Naive thymus-derived CD4-positive, alpha-beta T cell (primary cell): ENCODE measurements at regions of chr22 and their contacts with region 1.

Region 1: GRCh38 chr22:19629720-19630419 is 84.4 kb upstream of the SEPTIN5 start:
- DNase-seq: peak; percentile 65 to 91 (median 86)
- ATAC-seq: peak; percentile 97
- H3K4me3 ChIP-seq: no peak overlapping the region
- H3K4me3 Mint-ChIP-seq: peak overlapping the region in 1 of 10 donors; percentile 26
- H3K27ac ChIP-seq: no peak overlapping the region
- H3K27ac Mint-ChIP-seq: peak overlapping the region in 3 of 9 donors; percentile 6 to 56 (median 43)
- H3K4me1 ChIP-seq: peaks cover 0 to 7% of the 10 kb centered on the region in 2 donors
- H3K4me1 Mint-ChIP-seq: peaks cover 3 to 22% (median 10%) of the 10 kb centered on the region in 7 donors
- H3K27me3 ChIP-seq: no peaks in the 10 kb centered on the region
- H3K27me3 Mint-ChIP-seq: peaks cover 0 to 3% (median 0%) of the 10 kb centered on the region in 5 donors

Region 2: GRCh38 chr22:19178656-19179496 is 451.0 kb before region 1 on chr22 and contains the start of gene SLC25A1:
- CTCF ChIA-PET with region 1: no interaction called
- POLR2A ChIA-PET with region 1: no interaction called
- intact Hi-C with region 1: loop called in 1 of 2 experiments (anchors 1 kb)
- DNase-seq: peak in 8 of 9 donors; percentile 42 to 96 (median 49)
- ATAC-seq: peak; percentile 82
- H3K4me3 ChIP-seq: peak within 1 kb of the TSS; percentile 58
- H3K4me3 Mint-ChIP-seq: peak within 1 kb of the TSS; percentile 83 to 92 (median 86)
- H3K27ac ChIP-seq: peak within 1 kb of the TSS; percentile 63
- H3K27ac Mint-ChIP-seq: peak within 1 kb of the TSS; percentile 31 to 92 (median 85)
- H3K4me1 ChIP-seq: peaks cover 7 to 9% of the 10 kb centered on the region in 2 donors
- H3K4me1 Mint-ChIP-seq: peaks cover 13 to 28% (median 23%) of the 10 kb centered on the region in 7 donors
- H3K27me3 ChIP-seq: no peaks in the 10 kb centered on the region
- H3K27me3 Mint-ChIP-seq: no peaks in the 10 kb centered on the region
- total RNA-seq, gene SLC25A1: 19.3 to 34.0 (median 30.7) TPM

Region 3: GRCh38 chr22:19394274-19395050 is 235.4 kb before region 1 on chr22:
- CTCF ChIA-PET with region 1: interaction called, 3 read pairs
- POLR2A ChIA-PET with region 1: no interaction called
- intact Hi-C with region 1: loop called in 1 of 2 experiments (anchors 5 kb)
- DNase-seq: no peak
- ATAC-seq: no peak
- H3K4me3 ChIP-seq: no peak overlapping the region
- H3K4me3 Mint-ChIP-seq: no peak overlapping the region
- H3K27ac ChIP-seq: no peak overlapping the region
- H3K27ac Mint-ChIP-seq: no peak overlapping the region
- H3K4me1 ChIP-seq: no peaks in the 10 kb centered on the region
- H3K4me1 Mint-ChIP-seq: peaks cover 0 to 5% (median 0%) of the 10 kb centered on the region in 7 donors
- H3K27me3 ChIP-seq: no peaks in the 10 kb centered on the region
- H3K27me3 Mint-ChIP-seq: no peaks in the 10 kb centered on the region

Region 4: GRCh38 chr22:19495562-19496323 is 134.1 kb before region 1 on chr22:
- CTCF ChIA-PET with region 1: interaction called, 26 read pairs
- POLR2A ChIA-PET with region 1: interaction called, 8 read pairs
- intact Hi-C with region 1: loop called (anchors 1 kb)
- DNase-seq: peak in 7 of 9 donors; percentile 35 to 67 (median 57)
- ATAC-seq: peak; percentile 63
- H3K4me3 ChIP-seq: no peak overlapping the region
- H3K4me3 Mint-ChIP-seq: no peak overlapping the region
- H3K27ac ChIP-seq: no peak overlapping the region
- H3K27ac Mint-ChIP-seq: peak overlapping the region; percentile 49 to 88 (median 73)
- H3K4me1 ChIP-seq: peaks cover 0 to 9% of the 10 kb centered on the region in 2 donors
- H3K4me1 Mint-ChIP-seq: peaks cover 4 to 17% (median 12%) of the 10 kb centered on the region in 7 donors
- H3K27me3 ChIP-seq: no peaks in the 10 kb centered on the region
- H3K27me3 Mint-ChIP-seq: no peaks in the 10 kb centered on the region

Region 5: GRCh38 chr22:19703869-19704268 is 74.0 kb after region 1 on chr22:
- CTCF ChIA-PET with region 1: no interaction called
- POLR2A ChIA-PET with region 1: no interaction called
- intact Hi-C with region 1: no loop called
- DNase-seq: no peak
- ATAC-seq: no peak
- H3K4me3 ChIP-seq: no peak overlapping the region
- H3K4me3 Mint-ChIP-seq: no peak overlapping the region
- H3K27ac ChIP-seq: no peak overlapping the region
- H3K27ac Mint-ChIP-seq: no peak overlapping the region
- H3K4me1 ChIP-seq: no peaks in the 10 kb centered on the region
- H3K4me1 Mint-ChIP-seq: no peaks in the 10 kb centered on the region
- H3K27me3 ChIP-seq: no peaks in the 10 kb centered on the region
- H3K27me3 Mint-ChIP-seq: peaks cover 0 to 7% (median 0%) of the 10 kb centered on the region in 5 donors

Region 6: DNA sequence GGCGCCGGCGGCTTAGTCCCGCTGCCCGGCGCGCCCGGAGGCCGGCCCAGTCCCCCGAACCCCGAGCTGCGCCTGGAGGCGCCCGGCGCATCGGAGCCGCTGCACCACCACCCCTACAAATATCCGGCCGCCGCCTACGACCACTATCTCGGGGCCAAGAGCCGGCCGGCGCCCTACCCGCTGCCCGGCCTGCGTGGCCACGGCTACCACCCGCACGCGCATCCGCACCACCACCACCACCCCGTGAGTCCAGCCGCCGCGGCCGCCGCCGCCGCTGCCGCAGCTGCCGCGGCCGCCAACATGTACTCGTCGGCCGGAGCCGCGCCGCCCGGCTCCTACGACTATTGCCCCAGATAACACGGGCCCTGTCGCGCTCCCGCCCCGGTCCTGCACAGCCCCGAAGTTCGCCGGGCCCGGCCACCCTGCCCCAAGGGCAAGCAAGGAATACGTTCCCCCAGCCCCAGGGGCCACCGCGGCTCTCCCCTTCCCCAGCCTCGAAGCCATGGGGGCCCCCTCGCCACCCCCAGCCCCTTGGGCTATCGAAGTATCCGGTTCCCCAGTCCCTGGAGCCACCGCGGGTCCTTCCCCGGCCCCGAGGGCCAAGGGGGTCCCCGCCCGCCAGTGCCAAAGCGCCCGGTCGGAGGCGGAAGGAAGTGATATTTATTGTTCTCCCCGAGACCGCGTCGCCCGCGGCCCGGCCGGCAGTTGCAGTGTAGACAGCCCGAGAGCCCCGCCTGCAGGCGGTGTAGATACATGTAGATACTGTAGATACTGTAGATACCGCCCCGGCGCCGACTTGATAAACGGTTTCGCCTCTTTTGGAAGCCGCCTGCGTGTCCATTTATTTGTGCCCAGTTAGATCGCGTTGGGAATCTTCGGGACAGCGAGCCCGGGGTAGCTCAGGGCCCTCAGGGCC is 136.9 kb after region 1 on chr22:
- CTCF ChIA-PET with region 1: no interaction called
- POLR2A ChIA-PET with region 1: no interaction called
- intact Hi-C with region 1: no loop called
- DNase-seq: peak in 3 of 9 donors; percentile 23 to 52 (median 31)
- ATAC-seq: peak; percentile 79
- H3K4me3 ChIP-seq: no peak overlapping the region
- H3K4me3 Mint-ChIP-seq: peak overlapping the region in 9 of 10 donors; percentile 25 to 74 (median 43)
- H3K27ac ChIP-seq: no peak overlapping the region
- H3K27ac Mint-ChIP-seq: no peak overlapping the region
- H3K4me1 ChIP-seq: peaks cover 0 to 15% of the 10 kb centered on the region in 2 donors
- H3K4me1 Mint-ChIP-seq: peaks cover 0 to 28% (median 12%) of the 10 kb centered on the region in 7 donors
- H3K27me3 ChIP-seq: peaks cover 9 to 37% of the 10 kb centered on the region in 2 donors
- H3K27me3 Mint-ChIP-seq: peaks cover 45 to 67% (median 53%) of the 10 kb centered on the region in 5 donors

Region 7: GRCh38 chr22:20027966-20028854 is 398.3 kb after region 1 on chr22:
- CTCF ChIA-PET with region 1: no interaction called
- POLR2A ChIA-PET with region 1: no interaction called
- intact Hi-C with region 1: no loop called
- DNase-seq: peak in 1 of 9 donors; percentile 25
- ATAC-seq: no peak
- H3K4me3 ChIP-seq: no peak overlapping the region
- H3K4me3 Mint-ChIP-seq: no peak overlapping the region
- H3K27ac ChIP-seq: no peak overlapping the region
- H3K27ac Mint-ChIP-seq: no peak overlapping the region
- H3K4me1 ChIP-seq: peaks cover 11 to 13% of the 10 kb centered on the region in 2 donors
- H3K4me1 Mint-ChIP-seq: peaks cover 13 to 62% (median 34%) of the 10 kb centered on the region in 7 donors
- H3K27me3 ChIP-seq: no peaks in the 10 kb centered on the region
- H3K27me3 Mint-ChIP-seq: no peaks in the 10 kb centered on the region